Psoas muscle (tissue), 8 donors: ENCODE measurements at regions of chr5 and their contacts with region 1.

Region 1: GRCh38 chr5:150689120-150689519 is 11.7 kb downstream of the RBM22 start:
- DNase-seq: no peak
- ATAC-seq: no peak
- H3K4me3 ChIP-seq: no peak overlapping the region
- H3K27ac ChIP-seq: no peak overlapping the region
- H3K4me1 ChIP-seq: peaks cover 9% of the 10 kb centered on the region
- H3K27me3 ChIP-seq: no peaks in the 10 kb centered on the region
- CTCF ChIP-seq: no peak

Region 2: DNA sequence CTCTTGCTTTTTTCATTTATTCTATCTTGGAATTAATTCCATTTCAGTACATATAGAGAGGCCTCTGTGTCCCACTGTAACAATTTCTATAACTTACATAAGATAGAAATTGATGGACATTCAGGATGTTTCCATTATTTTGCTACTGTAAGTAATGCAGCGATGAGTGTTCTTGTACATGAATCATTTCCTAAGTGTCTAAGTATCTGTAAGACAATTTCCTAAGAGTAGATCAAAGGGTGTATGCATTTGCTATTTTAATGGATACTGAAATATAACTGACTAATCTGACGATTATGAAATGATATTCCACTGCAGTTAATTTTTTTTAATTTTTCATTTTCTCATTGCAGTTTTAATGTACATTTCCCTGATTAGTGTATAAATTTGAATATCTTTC is 34.7 kb after region 1 on chr5:
- intact Hi-C with region 1: loop called in 1 of 2 experiments (anchors 5 kb)
- DNase-seq: no peak
- ATAC-seq: no peak
- H3K4me3 ChIP-seq: no peak overlapping the region
- H3K27ac ChIP-seq: no peak overlapping the region
- H3K4me1 ChIP-seq: no peaks in the 10 kb centered on the region
- H3K27me3 ChIP-seq: no peaks in the 10 kb centered on the region
- CTCF ChIP-seq: no peak